Activated CD4-positive, alpha-beta T cell treated with anti-CD3 and anti-CD28 coated beads, Interleukin-2, amount 10 ng/mL, durations not matched to agents 24 days and 14 days (primary cell): ENCODE measurements at regions of chr10 and their contacts with region 1.

Region 1: GRCh38 chr10:8130973-8131911 is 76.8 kb downstream of the GATA3 start:
- DNase-seq: peak; percentile 84
- H3K4me3 Mint-ChIP-seq: peak overlapping the region; percentile 22
- H3K27ac Mint-ChIP-seq: peak overlapping the region; percentile 75
- H3K4me1 Mint-ChIP-seq: peaks cover 46% of the 10 kb centered on the region
- H3K27me3 Mint-ChIP-seq: peaks cover 4% of the 10 kb centered on the region

Region 2: GRCh38 chr10:8059959-8060703 is 71.1 kb before region 1 on chr10:
- intact Hi-C with region 1: loop called (anchors 1 kb)
- DNase-seq: peak; percentile 92
- H3K4me3 Mint-ChIP-seq: peak overlapping the region; percentile 90
- H3K27ac Mint-ChIP-seq: peak overlapping the region; percentile 93
- H3K4me1 Mint-ChIP-seq: peaks cover 70% of the 10 kb centered on the region
- H3K27me3 Mint-ChIP-seq: peaks cover 2% of the 10 kb centered on the region

Region 3: GRCh38 chr10:8238986-8239385 is 107.7 kb after region 1 on chr10:
- intact Hi-C with region 1: loop called (anchors 1 kb)
- DNase-seq: peak; percentile 79
- H3K4me3 Mint-ChIP-seq: peak overlapping the region; percentile 69
- H3K27ac Mint-ChIP-seq: peak overlapping the region; percentile 78
- H3K4me1 Mint-ChIP-seq: peaks cover 56% of the 10 kb centered on the region
- H3K27me3 Mint-ChIP-seq: peaks cover 4% of the 10 kb centered on the region

Region 4: DNA sequence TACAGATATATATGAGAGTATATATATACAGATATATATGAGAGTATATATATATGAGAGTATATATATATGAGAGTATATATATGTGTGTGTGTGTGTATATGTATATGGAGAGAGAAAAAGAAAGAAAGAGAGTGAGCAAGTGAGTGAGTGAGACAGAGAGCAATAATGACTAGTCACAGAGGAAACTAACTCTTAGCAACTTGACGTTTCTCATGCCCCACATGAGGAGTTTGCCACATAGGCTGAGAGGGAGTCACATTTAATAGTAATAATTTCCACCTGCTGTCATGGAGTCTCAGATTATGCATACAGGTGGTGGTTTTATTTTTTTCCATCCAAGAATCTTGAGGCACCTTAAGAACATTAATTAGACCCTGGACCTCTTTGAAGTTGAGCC is 123.1 kb after region 1 on chr10:
- intact Hi-C with region 1: loop called (anchors 1 kb)
- DNase-seq: no peak
- H3K4me3 Mint-ChIP-seq: peak overlapping the region; percentile 7
- H3K27ac Mint-ChIP-seq: peak overlapping the region; percentile 77
- H3K4me1 Mint-ChIP-seq: peaks cover 34% of the 10 kb centered on the region
- H3K27me3 Mint-ChIP-seq: no peaks in the 10 kb centered on the region

Region 5: DNA sequence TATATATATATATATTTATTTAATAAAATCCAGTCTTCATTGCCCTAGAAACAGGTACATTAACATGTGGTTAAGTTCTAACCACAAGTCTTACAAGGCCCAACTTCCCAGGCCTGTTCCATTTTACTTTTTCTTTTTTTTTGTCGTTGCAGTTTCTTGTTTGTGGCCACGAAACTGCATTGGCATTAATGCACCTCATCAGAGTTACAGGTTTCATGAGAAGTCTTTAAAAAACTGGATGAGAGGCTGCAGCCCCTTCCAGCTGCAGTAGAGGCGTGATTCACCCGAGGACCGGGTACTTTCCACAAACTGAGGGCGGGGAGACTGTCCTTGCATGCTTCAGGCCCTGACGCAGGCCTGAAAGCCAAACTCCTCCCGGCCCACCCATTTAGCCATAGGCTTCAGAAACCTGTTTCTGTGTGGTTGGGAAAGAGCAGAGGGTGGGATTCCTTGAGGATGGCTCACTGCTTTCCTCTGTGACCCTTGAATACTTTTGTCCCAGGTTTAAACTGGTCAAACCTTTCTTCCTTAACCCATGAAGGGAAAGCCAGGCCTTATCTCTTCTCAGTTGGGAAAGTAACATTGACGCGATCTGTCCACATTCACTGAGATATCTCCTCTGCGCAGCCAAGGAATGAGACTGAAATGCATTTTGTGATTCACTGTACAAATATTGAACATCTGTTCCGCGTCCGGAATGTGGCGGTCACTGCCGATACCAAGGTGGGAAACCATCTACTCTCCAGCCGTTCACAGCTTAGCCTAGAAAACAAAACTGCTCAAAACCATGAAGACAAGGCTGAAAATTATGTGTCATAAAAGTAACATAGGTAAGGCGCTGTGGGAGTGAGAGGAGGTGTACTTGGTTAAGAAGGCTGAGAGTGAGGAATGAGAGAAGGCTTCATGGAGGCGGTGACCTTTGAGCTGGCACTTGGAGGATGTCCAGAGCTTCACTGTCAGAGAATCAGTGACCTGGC is 235.0 kb after region 1 on chr10:
- intact Hi-C with region 1: no loop called
- DNase-seq: peak; percentile 69
- H3K4me3 Mint-ChIP-seq: no peak overlapping the region
- H3K27ac Mint-ChIP-seq: peak overlapping the region; percentile 81
- H3K4me1 Mint-ChIP-seq: peaks cover 43% of the 10 kb centered on the region
- H3K27me3 Mint-ChIP-seq: no peaks in the 10 kb centered on the region

Region 6: DNA sequence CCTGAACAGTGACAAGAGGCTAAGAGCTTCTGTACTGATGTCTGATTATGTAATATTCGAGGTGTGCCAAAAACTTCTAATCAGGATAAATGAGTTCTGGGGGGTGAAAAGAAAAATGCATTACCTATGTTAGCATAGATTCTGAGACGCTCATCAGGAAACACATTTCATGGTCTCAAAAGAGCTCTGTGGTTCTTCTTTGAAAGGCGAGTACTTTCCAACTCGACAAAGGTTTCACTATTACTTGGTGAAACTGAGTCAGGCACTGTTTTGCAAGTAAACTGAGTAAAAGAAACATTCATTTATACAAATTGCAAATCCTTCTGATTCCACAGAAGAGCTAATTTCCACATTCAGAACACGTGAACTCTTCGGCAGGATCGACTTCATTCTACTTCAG is 446.4 kb after region 1 on chr10:
- intact Hi-C with region 1: loop called (anchors 10 kb)
- DNase-seq: no peak
- H3K4me3 Mint-ChIP-seq: no peak overlapping the region
- H3K27ac Mint-ChIP-seq: peak overlapping the region; percentile 58
- H3K4me1 Mint-ChIP-seq: peaks cover 16% of the 10 kb centered on the region
- H3K27me3 Mint-ChIP-seq: peaks cover 5% of the 10 kb centered on the region

Region 7: GRCh38 chr10:9091530-9092093 is 960.4 kb after region 1 on chr10:
- intact Hi-C with region 1: loop called (anchors 2 kb)
- DNase-seq: no peak
- H3K4me3 Mint-ChIP-seq: no peak overlapping the region
- H3K27ac Mint-ChIP-seq: no peak overlapping the region
- H3K4me1 Mint-ChIP-seq: peaks cover 12% of the 10 kb centered on the region
- H3K27me3 Mint-ChIP-seq: no peaks in the 10 kb centered on the region